Left cardiac atrium (tissue), 4 donors: ENCODE measurements at regions of chr9 and their contacts with region 1.

Region 1: GRCh38 chr9:128688512-128689292 is at the start of gene SET:
- DNase-seq: peak; percentile 97
- ATAC-seq: peak; percentile 93 to 95
- total RNA-seq, gene SET: 158 to 191 TPM

Region 2: GRCh38 chr9:128595471-128595870 is 93.2 kb before region 1 on chr9:
- intact Hi-C with region 1: no loop called
- DNase-seq: no peak
- ATAC-seq: no peak

Region 3: GRCh38 chr9:128635283-128636023 is 53.2 kb before region 1 on chr9:
- intact Hi-C with region 1: loop called (anchors 5 to 10 kb)
- DNase-seq: peak; percentile 94
- ATAC-seq: peak; percentile 91 to 94